Prostate gland (tissue), 2 donors: ENCODE measurements at regions of chr17 and their contacts with region 1.

Region 1: DNA sequence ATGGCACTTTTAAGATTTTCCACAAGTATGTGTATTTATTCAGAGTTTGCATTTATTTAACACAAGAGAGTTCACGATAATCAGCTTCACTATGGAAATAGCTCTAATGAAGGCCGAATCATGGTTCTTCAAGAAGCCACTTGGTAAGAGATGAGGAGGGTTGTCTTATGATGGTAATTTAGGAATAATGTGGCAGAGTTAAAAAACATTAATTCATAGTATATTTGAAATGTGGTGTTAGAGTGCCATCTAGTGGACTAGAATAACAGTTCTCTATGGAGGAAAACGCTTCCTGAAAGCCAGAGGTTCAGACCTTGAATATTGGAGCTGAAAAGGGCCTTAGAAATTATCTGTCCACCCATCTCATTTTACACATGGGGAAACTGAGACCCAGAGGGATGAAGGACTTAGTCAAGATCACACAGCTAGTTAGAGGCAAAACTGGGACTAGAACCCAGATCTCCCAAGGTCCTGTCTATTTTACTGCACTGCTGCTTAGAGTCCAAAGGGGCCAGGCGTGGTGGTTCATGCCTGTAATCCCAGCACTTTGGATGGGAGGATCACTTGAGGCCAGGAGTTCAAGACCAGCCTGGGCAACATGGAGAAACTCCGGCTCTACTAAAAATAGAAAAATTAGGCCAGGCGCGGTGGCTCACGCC is 33.8 kb upstream of the KPNB1 start:
- DNase-seq: no peak
- H3K4me3 ChIP-seq: no peak overlapping the region
- H3K27ac ChIP-seq: no peak overlapping the region
- H3K4me1 ChIP-seq: peaks cover 3% of the 10 kb centered on the region
- H3K27me3 ChIP-seq: no peaks in the 10 kb centered on the region
- CTCF ChIP-seq: peak; percentile 57 to 87 (median 82)
- POLR2A ChIP-seq: no peak

Region 2: GRCh38 chr17:47188876-47189731 is 426.8 kb before region 1 on chr17 and contains the start of gene CDC27:
- intact Hi-C with region 1: loop called (anchors 5 kb)
- DNase-seq: peak; percentile 99
- H3K4me3 ChIP-seq: peak within 1 kb of the TSS; percentile 82 to 86
- H3K27ac ChIP-seq: peak within 1 kb of the TSS; percentile 90 to 93
- H3K4me1 ChIP-seq: no peaks in the 10 kb centered on the region
- H3K27me3 ChIP-seq: no peaks in the 10 kb centered on the region
- CTCF ChIP-seq: peak in 2 of 4 experiments; percentile 21 to 22
- POLR2A ChIP-seq: peak; percentile 36
- total RNA-seq, gene CDC27: 32.2 to 76.9 TPM

Region 3: GRCh38 chr17:47229535-47230443 is 386.1 kb before region 1 on chr17:
- intact Hi-C with region 1: loop called (anchors 10 kb)
- DNase-seq: peak; percentile 85
- H3K4me3 ChIP-seq: no peak overlapping the region
- H3K27ac ChIP-seq: no peak overlapping the region
- H3K4me1 ChIP-seq: no peaks in the 10 kb centered on the region
- H3K27me3 ChIP-seq: no peaks in the 10 kb centered on the region
- CTCF ChIP-seq: peak; percentile 94 to 98 (median 97)
- POLR2A ChIP-seq: no peak

Region 4: DNA sequence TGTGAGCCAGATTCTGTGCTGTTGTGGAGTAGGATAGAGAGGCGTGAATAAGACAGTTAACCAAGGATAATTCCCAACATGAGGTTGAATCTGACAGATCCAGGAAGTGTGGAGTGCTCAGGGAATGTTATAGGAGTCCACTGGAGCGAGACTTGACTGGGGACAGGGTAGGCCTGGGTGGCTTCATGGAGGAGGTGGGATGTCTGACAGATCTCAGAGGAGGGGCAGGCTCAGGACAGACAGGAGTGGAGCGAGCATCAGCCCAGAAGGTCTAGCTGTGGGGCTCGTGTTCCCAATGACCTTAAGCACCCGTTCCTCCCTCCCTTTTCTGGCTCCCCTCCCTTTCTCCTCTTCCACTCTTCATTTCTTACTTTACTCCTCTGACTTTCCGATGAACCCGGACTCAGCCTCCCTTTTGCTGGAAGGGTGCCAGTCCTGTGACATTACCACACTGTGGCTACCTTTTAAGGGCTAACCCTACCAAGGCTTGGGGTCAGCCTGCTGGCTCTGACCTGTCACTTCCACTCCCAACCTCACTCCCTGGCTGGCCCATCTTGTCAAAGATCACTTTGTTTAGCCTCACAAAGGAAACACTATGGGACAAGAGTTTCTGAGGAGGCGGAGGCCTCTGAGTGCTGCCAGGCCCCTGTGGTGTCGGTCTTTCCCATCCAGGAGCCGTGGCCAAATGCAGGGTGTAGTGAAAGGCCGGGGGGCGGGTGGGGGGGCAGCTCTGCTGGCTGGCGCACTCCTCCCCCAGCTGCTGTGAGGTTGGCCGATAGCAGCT is 320.6 kb before region 1 on chr17:
- intact Hi-C with region 1: no loop called
- DNase-seq: no peak
- H3K4me3 ChIP-seq: no peak overlapping the region
- H3K27ac ChIP-seq: peak overlapping the region; percentile 16 to 29
- H3K4me1 ChIP-seq: peaks cover 17% of the 10 kb centered on the region
- H3K27me3 ChIP-seq: no peaks in the 10 kb centered on the region
- CTCF ChIP-seq: no peak
- POLR2A ChIP-seq: no peak

Region 5: GRCh38 chr17:47324223-47325020 is 291.5 kb before region 1 on chr17:
- intact Hi-C with region 1: loop called (anchors 5 kb)
- DNase-seq: peak; percentile 43
- H3K4me3 ChIP-seq: peak overlapping the region; percentile 58 to 76
- H3K27ac ChIP-seq: peak overlapping the region; percentile 87 to 94
- H3K4me1 ChIP-seq: no peaks in the 10 kb centered on the region
- H3K27me3 ChIP-seq: no peaks in the 10 kb centered on the region
- CTCF ChIP-seq: no peak
- POLR2A ChIP-seq: no peak

Region 6: GRCh38 chr17:47733047-47733673 is 117.3 kb after region 1 on chr17 and contains the start of gene TBX21:
- intact Hi-C with region 1: no loop called
- DNase-seq: peak; percentile 41
- H3K4me3 ChIP-seq: peak within 1 kb of the TSS; percentile 28 to 29
- H3K27ac ChIP-seq: no peak within 1 kb of the TSS
- H3K4me1 ChIP-seq: no peaks in the 10 kb centered on the region
- H3K27me3 ChIP-seq: peaks cover 7% of the 10 kb centered on the region
- CTCF ChIP-seq: no peak
- POLR2A ChIP-seq: no peak
- total RNA-seq, gene TBX21: 0.27 to 0.45 TPM